GM12878 (cell line): ENCODE measurements at regions of chr5 and their contacts with region 1.

Region 1: GRCh38 chr5:61280205-61280604 is 51.9 kb upstream of the ZSWIM6 start:
- DNase-seq: no peak
- ATAC-seq: peak; percentile 79
- H3K4me3 ChIP-seq: no peak overlapping the region
- H3K27ac ChIP-seq: no peak overlapping the region
- H3K4me1 ChIP-seq: peaks cover 5% of the 10 kb centered on the region; the same call in 1 of the 2 replicates
- H3K27me3 ChIP-seq: no peaks in the 10 kb centered on the region
- CTCF ChIP-seq: no peak
- EP300 ChIP-seq: no peak
- POLR2A ChIP-seq: no peak
- RAD21 ChIP-seq: no peak

Region 2: GRCh38 chr5:61267116-61267515 is 13.1 kb before region 1 on chr5:
- CTCF ChIA-PET with region 1: interaction called, 7 read pairs
- POLR2A ChIA-PET with region 1: interaction called, 3 read pairs
- RAD21 ChIA-PET with region 1: interaction called, 3 read pairs
- SMC1A ChIA-PET with region 1: interaction called, 13 read pairs
- in situ Hi-C with region 1: no loop called
- intact Hi-C with region 1: no loop called
- DNase-seq: no peak
- ATAC-seq: no peak
- H3K4me3 ChIP-seq: no peak overlapping the region
- H3K27ac ChIP-seq: no peak overlapping the region
- H3K4me1 ChIP-seq: no peaks in the 10 kb centered on the region
- H3K27me3 ChIP-seq: no peaks in the 10 kb centered on the region
- CTCF ChIP-seq: no peak
- EP300 ChIP-seq: no peak
- POLR2A ChIP-seq: no peak
- RAD21 ChIP-seq: no peak

Region 3: GRCh38 chr5:61304611-61305321 is 24.6 kb after region 1 on chr5:
- CTCF ChIA-PET with region 1: interaction called, 7 read pairs
- POLR2A ChIA-PET with region 1: no interaction called
- RAD21 ChIA-PET with region 1: interaction called, 4 read pairs
- SMC1A ChIA-PET with region 1: interaction called, 10 read pairs
- in situ Hi-C with region 1: no loop called
- intact Hi-C with region 1: no loop called
- DNase-seq: no peak
- ATAC-seq: peak; percentile 37; the same call in 2 of the 3 replicates
- H3K4me3 ChIP-seq: no peak overlapping the region
- H3K27ac ChIP-seq: no peak overlapping the region
- H3K4me1 ChIP-seq: peaks cover 15% of the 10 kb centered on the region
- H3K27me3 ChIP-seq: no peaks in the 10 kb centered on the region
- CTCF ChIP-seq: no peak
- EP300 ChIP-seq: no peak
- POLR2A ChIP-seq: no peak
- RAD21 ChIP-seq: no peak